Transverse colon (tissue), 4 donors: ENCODE measurements at regions of chr17 and their contacts with region 1.

Region 1: GRCh38 chr17:10646392-10646990 is 10.6 kb downstream of the MYH3 start:
- DNase-seq: peak; percentile 69
- H3K4me3 ChIP-seq: no peak overlapping the region
- H3K27ac ChIP-seq: no peak overlapping the region
- H3K4me1 ChIP-seq: no peaks in the 10 kb centered on the region
- H3K27me3 ChIP-seq: no peaks in the 10 kb centered on the region
- CTCF ChIP-seq: peak; percentile 73 to 87 (median 85)
- EP300 ChIP-seq: no peak
- POLR2A ChIP-seq: no peak

Region 2: DNA sequence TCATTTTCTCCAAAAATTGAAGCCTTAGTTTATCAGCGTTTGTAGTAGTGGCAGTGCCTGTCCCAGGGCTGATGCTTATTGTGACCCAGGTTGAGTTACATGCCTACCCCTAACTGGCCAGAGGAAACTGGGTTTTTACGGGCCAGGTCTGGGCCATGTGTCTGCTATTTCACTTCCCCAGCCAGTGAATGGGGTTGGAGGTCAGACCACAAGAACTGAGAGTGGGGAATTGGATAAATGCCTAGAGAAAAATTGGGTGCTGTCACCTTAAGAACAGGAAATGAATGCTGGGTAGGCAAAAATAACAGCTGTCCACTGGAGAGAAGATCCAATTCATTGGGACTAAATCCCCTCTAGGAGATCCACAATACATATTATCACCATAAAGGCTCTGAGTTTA is 56.1 kb after region 1 on chr17:
- in situ Hi-C with region 1: no loop called
- intact Hi-C with region 1: loop called (anchors 10 kb)
- DNase-seq: no peak
- H3K4me3 ChIP-seq: no peak overlapping the region
- H3K27ac ChIP-seq: no peak overlapping the region
- H3K4me1 ChIP-seq: peaks cover 5 to 15% (median 14%) of the 10 kb centered on the region in 4 donors
- H3K27me3 ChIP-seq: no peaks in the 10 kb centered on the region
- CTCF ChIP-seq: no peak
- EP300 ChIP-seq: no peak
- POLR2A ChIP-seq: no peak

Region 3: DNA sequence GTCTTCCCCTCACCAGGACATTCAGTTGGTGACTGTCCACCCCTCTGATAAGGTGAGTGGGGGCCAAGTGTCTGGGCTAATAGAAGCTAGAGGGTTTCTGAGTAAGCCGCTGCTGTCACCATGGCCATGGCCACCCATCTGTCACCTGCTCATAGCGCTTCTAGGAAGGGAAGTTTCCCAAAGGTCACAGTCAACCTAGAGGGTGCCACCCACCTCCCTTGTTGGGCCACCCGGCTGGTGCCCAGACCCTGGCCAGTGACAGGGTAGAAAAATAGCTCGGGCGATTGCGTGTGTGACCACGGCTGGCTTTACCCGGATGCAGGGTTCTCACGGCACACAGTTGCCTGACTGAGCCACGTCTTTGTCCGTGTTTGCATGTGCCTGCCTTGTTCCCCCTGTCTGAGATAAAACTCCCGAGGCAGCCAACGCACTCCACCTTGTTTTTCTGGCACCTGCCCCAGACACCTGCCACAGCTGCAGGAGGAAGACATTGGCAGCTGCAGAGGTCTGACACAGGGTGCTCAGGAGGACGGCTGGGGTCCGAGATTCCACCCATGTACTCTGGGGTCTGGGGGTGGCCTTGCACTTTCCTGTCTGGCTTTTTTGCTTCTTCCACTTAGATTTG is 190.6 kb after region 1 on chr17:
- in situ Hi-C with region 1: loop called in 3 of 4 experiments (anchors 5 to 25 kb)
- intact Hi-C with region 1: no loop called
- DNase-seq: peak; percentile 77
- H3K4me3 ChIP-seq: no peak overlapping the region
- H3K27ac ChIP-seq: peak overlapping the region in 3 of 4 donors; percentile 37 to 71 (median 59)
- H3K4me1 ChIP-seq: peaks cover 0 to 24% (median 12%) of the 10 kb centered on the region in 4 donors
- H3K27me3 ChIP-seq: no peaks in the 10 kb centered on the region
- CTCF ChIP-seq: no peak
- EP300 ChIP-seq: no peak
- POLR2A ChIP-seq: no peak